MCF 10A (cell line): ENCODE measurements at regions of chr7 and their contacts with region 1.

Region 1: GRCh38 chr7:77759294-77759889 is 38.8 kb downstream of the TMEM60 start:
- DNase-seq: peak; percentile 78
- H3K4me3 Mint-ChIP-seq: no peak overlapping the region
- H3K27ac Mint-ChIP-seq: peak overlapping the region; percentile 13
- H3K4me1 Mint-ChIP-seq: peaks cover 6% of the 10 kb centered on the region
- H3K27me3 Mint-ChIP-seq: no peaks in the 10 kb centered on the region
- CTCF ChIP-seq: peak; percentile 78

Region 2: GRCh38 chr7:77657427-77658224 is 101.8 kb before region 1 on chr7:
- CTCF ChIA-PET with region 1: interaction called, 196 read pairs
- POLR2A ChIA-PET with region 1: interaction called, 10 read pairs
- intact Hi-C with region 1: loop called (anchors 1 kb)
- DNase-seq: peak; percentile 65
- H3K4me3 Mint-ChIP-seq: no peak overlapping the region
- H3K27ac Mint-ChIP-seq: no peak overlapping the region
- H3K4me1 Mint-ChIP-seq: peaks cover 2% of the 10 kb centered on the region
- H3K27me3 Mint-ChIP-seq: no peaks in the 10 kb centered on the region
- CTCF ChIP-seq: peak; percentile 56

Region 3: DNA sequence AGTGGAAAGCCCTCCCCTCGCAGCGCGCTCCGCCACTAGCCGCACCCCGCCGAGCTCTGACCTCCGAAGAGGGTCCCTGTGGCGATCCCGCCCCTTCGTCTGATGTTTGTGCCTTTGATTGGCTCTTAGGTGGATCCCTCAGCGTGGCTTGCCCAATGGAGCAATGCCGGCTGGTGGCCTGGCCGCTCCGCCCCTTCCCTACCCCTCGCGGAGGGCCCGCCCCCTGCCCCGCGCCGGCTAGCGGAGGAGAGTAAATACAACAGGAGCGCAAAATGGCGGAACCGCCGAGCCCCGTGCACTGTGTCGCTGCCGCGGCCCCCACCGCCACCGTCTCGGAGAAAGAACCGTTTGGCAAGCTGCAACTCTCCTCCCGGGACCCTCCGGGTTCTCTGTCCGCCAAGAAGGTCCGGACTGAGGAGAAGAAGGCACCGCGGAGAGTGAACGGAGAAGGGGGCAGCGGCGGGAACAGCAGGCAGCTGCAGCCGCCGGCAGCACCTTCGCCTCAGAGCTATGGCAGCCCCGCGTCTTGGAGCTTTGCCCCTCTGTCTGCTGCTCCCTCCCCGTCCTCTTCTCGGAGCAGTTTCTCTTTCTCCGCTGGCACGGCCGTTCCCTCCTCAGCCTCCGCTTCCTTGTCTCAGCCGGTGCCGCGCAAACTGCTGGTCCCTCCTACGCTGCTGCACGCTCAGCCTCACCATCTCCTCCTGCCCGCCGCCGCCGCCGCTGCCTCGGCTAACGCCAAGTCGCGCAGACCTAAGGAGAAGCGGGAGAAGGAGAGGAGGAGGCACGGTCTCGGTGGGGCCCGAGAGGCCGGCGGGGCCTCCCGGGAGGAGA is 63.0 kb before region 1 on chr7 and contains the start of gene RSBN1L:
- CTCF ChIA-PET with region 1: interaction called, 12 read pairs
- POLR2A ChIA-PET with region 1: interaction called, 23 read pairs
- intact Hi-C with region 1: loop called (anchors 1 kb)
- DNase-seq: peak; percentile 98
- H3K4me3 Mint-ChIP-seq: peak within 1 kb of the TSS; percentile 98
- H3K27ac Mint-ChIP-seq: peak within 1 kb of the TSS; percentile 95
- H3K4me1 Mint-ChIP-seq: peaks cover 24% of the 10 kb centered on the region
- H3K27me3 Mint-ChIP-seq: no peaks in the 10 kb centered on the region
- CTCF ChIP-seq: no peak
- total RNA-seq, gene RSBN1L: 10.9 and 12.1 TPM in 2 replicates

Region 4: GRCh38 chr7:77734659-77735421 is 24.6 kb before region 1 on chr7:
- CTCF ChIA-PET with region 1: interaction called, 11 read pairs
- POLR2A ChIA-PET with region 1: interaction called, 3 read pairs
- intact Hi-C with region 1: no loop called
- DNase-seq: no peak
- H3K4me3 Mint-ChIP-seq: no peak overlapping the region
- H3K27ac Mint-ChIP-seq: no peak overlapping the region
- H3K4me1 Mint-ChIP-seq: peaks cover 6% of the 10 kb centered on the region
- H3K27me3 Mint-ChIP-seq: no peaks in the 10 kb centered on the region
- CTCF ChIP-seq: no peak

Region 5: GRCh38 chr7:77771901-77772300 is 12.5 kb after region 1 on chr7:
- CTCF ChIA-PET with region 1: interaction called, 15 read pairs
- POLR2A ChIA-PET with region 1: interaction called, 4 read pairs
- intact Hi-C with region 1: no loop called
- DNase-seq: no peak
- H3K4me3 Mint-ChIP-seq: no peak overlapping the region
- H3K27ac Mint-ChIP-seq: no peak overlapping the region
- H3K4me1 Mint-ChIP-seq: no peaks in the 10 kb centered on the region
- H3K27me3 Mint-ChIP-seq: no peaks in the 10 kb centered on the region
- CTCF ChIP-seq: no peak

Region 6: GRCh38 chr7:77812290-77812685 is 52.9 kb after region 1 on chr7:
- CTCF ChIA-PET with region 1: no interaction called
- POLR2A ChIA-PET with region 1: no interaction called
- intact Hi-C with region 1: no loop called
- DNase-seq: no peak
- H3K4me3 Mint-ChIP-seq: no peak overlapping the region
- H3K27ac Mint-ChIP-seq: no peak overlapping the region
- H3K4me1 Mint-ChIP-seq: no peaks in the 10 kb centered on the region
- H3K27me3 Mint-ChIP-seq: no peaks in the 10 kb centered on the region
- CTCF ChIP-seq: no peak